Naive thymus-derived CD4-positive, alpha-beta T cell (primary cell): ENCODE measurements at regions of chr1 and their contacts with region 1.

Region 1: GRCh38 chr1:119662034-119662437 is 14.0 kb upstream of the ZNF697 start:
- DNase-seq: no peak
- ATAC-seq: no peak
- H3K4me3 ChIP-seq: no peak overlapping the region
- H3K4me3 Mint-ChIP-seq: no peak overlapping the region
- H3K27ac ChIP-seq: no peak overlapping the region
- H3K27ac Mint-ChIP-seq: no peak overlapping the region
- H3K4me1 ChIP-seq: no peaks in the 10 kb centered on the region
- H3K4me1 Mint-ChIP-seq: peaks cover 0 to 16% (median 0%) of the 10 kb centered on the region in 7 donors
- H3K27me3 ChIP-seq: no peaks in the 10 kb centered on the region
- H3K27me3 Mint-ChIP-seq: peaks cover 20 to 34% (median 31%) of the 10 kb centered on the region in 5 donors

Region 2: DNA sequence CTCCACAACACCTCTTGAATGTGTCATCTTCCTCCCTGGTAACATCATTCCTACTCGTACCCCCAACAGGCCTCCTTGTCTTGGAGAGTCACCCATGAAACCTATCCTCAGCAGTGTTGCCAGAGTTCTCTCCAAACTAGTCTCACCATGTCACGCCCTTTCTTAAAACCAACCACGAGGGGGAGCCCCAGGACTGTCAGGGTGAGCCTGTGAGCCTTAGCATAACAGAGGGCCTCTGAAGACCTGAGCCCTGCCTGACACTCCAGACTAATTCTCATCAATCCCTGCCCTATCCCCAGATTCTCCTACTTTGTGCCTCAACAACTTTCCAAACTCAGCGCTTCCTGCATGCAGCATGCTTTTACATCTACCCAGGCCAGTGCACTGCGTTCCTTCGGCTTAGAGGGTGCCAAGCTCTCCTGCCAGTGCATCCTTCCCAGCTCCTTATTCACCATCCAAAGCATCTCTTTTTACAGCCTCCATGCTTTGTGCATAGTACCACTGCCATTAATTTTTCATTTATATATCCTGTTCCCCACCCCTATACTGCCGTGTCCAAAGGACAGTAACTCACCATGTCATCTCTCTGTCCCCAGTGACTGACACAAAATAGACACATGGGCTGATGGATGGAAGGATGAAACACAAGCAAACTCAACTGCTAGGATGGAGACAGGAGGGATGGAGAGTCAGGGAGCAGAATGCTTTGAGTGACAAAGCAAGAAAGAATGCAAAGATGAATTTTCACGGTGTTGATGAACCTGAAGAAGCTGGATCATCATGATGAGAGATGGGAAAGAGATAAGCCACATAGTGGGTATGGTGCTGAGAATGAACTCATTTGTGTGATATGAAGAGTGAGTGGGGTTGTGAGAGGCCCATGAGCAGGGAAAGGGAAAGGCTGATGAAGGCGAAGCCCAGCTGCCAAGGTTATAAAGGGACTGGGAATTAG is 48.0 kb before region 1 on chr1:
- CTCF ChIA-PET with region 1: no interaction called
- POLR2A ChIA-PET with region 1: no interaction called
- intact Hi-C with region 1: loop called in 1 of 2 experiments (anchors 1 kb)
- DNase-seq: peak; percentile 18 to 77 (median 40)
- ATAC-seq: peak; percentile 78
- H3K4me3 ChIP-seq: no peak overlapping the region
- H3K4me3 Mint-ChIP-seq: no peak overlapping the region
- H3K27ac ChIP-seq: no peak overlapping the region
- H3K27ac Mint-ChIP-seq: no peak overlapping the region
- H3K4me1 ChIP-seq: no peaks in the 10 kb centered on the region
- H3K4me1 Mint-ChIP-seq: peaks cover 0 to 3% (median 0%) of the 10 kb centered on the region in 7 donors
- H3K27me3 ChIP-seq: no peaks in the 10 kb centered on the region
- H3K27me3 Mint-ChIP-seq: peaks cover 0 to 13% (median 7%) of the 10 kb centered on the region in 5 donors

Region 3: DNA sequence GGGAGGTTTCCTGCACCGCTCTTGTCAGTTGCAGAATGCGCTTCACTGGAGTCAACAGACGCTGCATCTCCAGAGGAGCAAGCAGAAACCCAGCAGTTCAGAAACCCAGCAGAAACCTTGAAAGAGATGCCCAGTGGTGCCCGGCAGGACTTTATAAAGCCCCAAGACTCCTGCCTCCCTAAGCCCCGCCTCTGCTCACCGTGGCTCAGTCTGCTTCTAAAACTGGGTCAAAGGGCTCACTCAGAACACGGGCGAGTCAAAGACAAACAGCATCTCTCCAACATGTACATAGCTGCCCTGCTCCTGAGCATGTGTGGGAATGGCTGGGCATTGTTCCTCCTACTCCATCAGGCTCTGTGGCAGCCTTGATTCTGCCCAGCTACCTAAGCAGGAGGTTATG is 106.7 kb after region 1 on chr1 and contains the start of gene HMGCS2:
- CTCF ChIA-PET with region 1: no interaction called
- POLR2A ChIA-PET with region 1: no interaction called
- intact Hi-C with region 1: no loop called
- DNase-seq: no peak
- ATAC-seq: no peak
- H3K4me3 ChIP-seq: no peak within 1 kb of the TSS
- H3K4me3 Mint-ChIP-seq: no peak within 1 kb of the TSS
- H3K27ac ChIP-seq: no peak within 1 kb of the TSS
- H3K27ac Mint-ChIP-seq: no peak within 1 kb of the TSS
- H3K4me1 ChIP-seq: no peaks in the 10 kb centered on the region
- H3K4me1 Mint-ChIP-seq: no peaks in the 10 kb centered on the region
- H3K27me3 ChIP-seq: no peaks in the 10 kb centered on the region
- H3K27me3 Mint-ChIP-seq: peaks cover 17 to 50% (median 19%) of the 10 kb centered on the region in 5 donors
- total RNA-seq, gene HMGCS2: not detected